Ascending aorta (tissue), 2 donors: ENCODE measurements at regions of chr13 and their contacts with region 1.

Region 1: GRCh38 chr13:27403203-27403678 is 21.2 kb upstream of the GTF3A start:
- DNase-seq: no peak
- H3K4me3 ChIP-seq: no peak overlapping the region
- H3K27ac ChIP-seq: peak overlapping the region; percentile 66 to 71
- H3K4me1 ChIP-seq: peaks cover 4 to 13% of the 10 kb centered on the region in 2 donors
- H3K27me3 ChIP-seq: no peaks in the 10 kb centered on the region
- CTCF ChIP-seq: no peak

Region 2: GRCh38 chr13:27424246-27425157 is 21.3 kb after region 1 on chr13 and contains the start of gene GTF3A:
- intact Hi-C with region 1: loop called (anchors 1 kb)
- DNase-seq: peak; percentile 37 to 87
- H3K4me3 ChIP-seq: peak within 1 kb of the TSS; percentile 82 to 94
- H3K27ac ChIP-seq: peak within 1 kb of the TSS; percentile 84 to 87
- H3K4me1 ChIP-seq: peaks cover 9 to 22% of the 10 kb centered on the region in 2 donors
- H3K27me3 ChIP-seq: no peaks in the 10 kb centered on the region
- CTCF ChIP-seq: no peak
- total RNA-seq, gene GTF3A: 197 TPM